ENCODE measurements at regions of chr1 and their contacts with region 1.

Region 1: GRCh38 chr1:88800382-88801051 is 90.8 kb downstream of the GTF2B start:
- H3K4me3 Mint-ChIP-seq: no peak overlapping the region
- H3K27ac Mint-ChIP-seq: no peak overlapping the region
- H3K4me1 Mint-ChIP-seq: peaks cover 26% of the 10 kb centered on the region
- H3K27me3 Mint-ChIP-seq: no peaks in the 10 kb centered on the region

Region 2: DNA sequence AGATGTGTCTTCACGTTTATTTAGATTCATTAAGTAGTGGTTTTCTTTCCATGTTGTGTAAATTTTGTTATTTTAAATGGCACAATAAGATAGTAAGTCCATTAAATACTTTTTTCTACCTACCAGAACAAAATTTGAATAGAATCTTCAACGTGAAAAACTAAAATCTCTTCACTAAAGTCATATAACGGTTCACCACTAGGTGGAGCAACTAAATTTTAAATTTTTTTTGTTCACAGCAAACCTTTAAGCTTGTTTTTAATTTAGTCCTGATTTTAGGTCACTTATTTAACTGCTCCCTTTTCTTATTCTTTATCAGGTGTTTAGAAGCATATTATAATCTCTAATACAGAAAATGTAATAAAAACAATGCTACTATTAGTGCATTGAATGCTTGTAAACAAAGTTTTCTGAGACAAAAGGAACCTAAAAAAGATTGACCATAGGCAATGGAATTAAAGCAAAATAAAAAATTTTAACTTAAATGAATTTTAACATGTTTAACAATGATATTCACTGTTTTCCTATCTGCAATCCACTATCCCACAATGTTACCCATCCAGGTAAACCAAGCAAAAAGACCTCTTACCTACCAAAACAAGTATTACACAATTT is 144.7 kb before region 1 on chr1:
- intact Hi-C with region 1: loop called (anchors 10 kb)
- H3K4me3 Mint-ChIP-seq: no peak overlapping the region
- H3K27ac Mint-ChIP-seq: no peak overlapping the region
- H3K4me1 Mint-ChIP-seq: no peaks in the 10 kb centered on the region
- H3K27me3 Mint-ChIP-seq: no peaks in the 10 kb centered on the region

Region 3: GRCh38 chr1:88773540-88774150 is 26.9 kb before region 1 on chr1:
- intact Hi-C with region 1: no loop called
- H3K4me3 Mint-ChIP-seq: no peak overlapping the region
- H3K27ac Mint-ChIP-seq: no peak overlapping the region
- H3K4me1 Mint-ChIP-seq: no peaks in the 10 kb centered on the region
- H3K27me3 Mint-ChIP-seq: no peaks in the 10 kb centered on the region

Region 4: DNA sequence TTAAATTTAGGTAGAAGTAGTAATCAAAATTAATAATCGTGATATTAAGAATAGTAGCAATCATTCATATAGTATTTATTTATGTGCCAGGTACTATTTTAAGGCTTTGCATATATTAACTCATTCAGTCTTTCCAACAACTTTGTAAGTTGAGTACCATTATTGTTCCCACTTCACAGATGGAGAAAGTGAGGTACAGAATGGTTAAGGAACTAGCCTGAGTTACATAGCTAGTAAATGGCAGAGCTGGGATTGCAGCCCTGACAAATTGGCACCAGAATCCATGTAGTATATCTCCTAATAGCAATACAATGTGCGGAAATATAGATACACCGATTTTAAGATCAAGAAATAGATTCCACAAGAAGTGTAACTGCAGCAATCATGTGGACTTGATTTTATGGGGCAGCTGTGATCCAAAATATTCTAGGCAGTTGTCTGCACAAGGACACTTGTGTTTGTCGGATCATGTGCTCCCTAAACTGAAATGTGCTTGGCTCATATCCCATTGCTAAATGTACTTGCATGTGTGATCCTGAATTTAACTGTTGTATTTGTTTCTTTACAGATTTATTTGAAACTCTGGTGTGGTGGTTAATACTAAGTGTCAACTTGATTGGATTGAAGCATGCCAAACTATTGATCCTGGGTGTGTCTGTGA is 96.7 kb after region 1 on chr1:
- intact Hi-C with region 1: no loop called
- H3K4me3 Mint-ChIP-seq: no peak overlapping the region
- H3K27ac Mint-ChIP-seq: no peak overlapping the region
- H3K4me1 Mint-ChIP-seq: no peaks in the 10 kb centered on the region
- H3K27me3 Mint-ChIP-seq: no peaks in the 10 kb centered on the region

Region 5: GRCh38 chr1:88998716-88999115 is 198.2 kb after region 1 on chr1:
- intact Hi-C with region 1: no loop called
- H3K4me3 Mint-ChIP-seq: no peak overlapping the region
- H3K27ac Mint-ChIP-seq: no peak overlapping the region
- H3K4me1 Mint-ChIP-seq: peaks cover 18% of the 10 kb centered on the region
- H3K27me3 Mint-ChIP-seq: no peaks in the 10 kb centered on the region

Measured in dendritic cell treated with granulocyte-macrophage colony-stimulating factor and Interleukin-4, amounts not matched to agents 40 ng/mL and 50 ng/mL, for 4 days (primary cell).